Activated CD8-positive, alpha-beta T cell treated with anti-CD3 and anti-CD28 coated beads, Interleukin-2, amount 10 ng/mL, durations not matched to agents 7 days and 5 days (primary cell): ENCODE measurements at regions of chr17 and their contacts with region 1.

Region 1: GRCh38 chr17:57284984-57285646 is 28.8 kb downstream of the MSI2 start:
- DNase-seq: peak; percentile 78
- ATAC-seq: peak; percentile 67
- H3K4me3 Mint-ChIP-seq: peak overlapping the region; percentile 70
- H3K27ac Mint-ChIP-seq: peak overlapping the region; percentile 89
- H3K4me1 Mint-ChIP-seq: peaks cover 81% of the 10 kb centered on the region
- H3K27me3 Mint-ChIP-seq: no peaks in the 10 kb centered on the region

Region 2: DNA sequence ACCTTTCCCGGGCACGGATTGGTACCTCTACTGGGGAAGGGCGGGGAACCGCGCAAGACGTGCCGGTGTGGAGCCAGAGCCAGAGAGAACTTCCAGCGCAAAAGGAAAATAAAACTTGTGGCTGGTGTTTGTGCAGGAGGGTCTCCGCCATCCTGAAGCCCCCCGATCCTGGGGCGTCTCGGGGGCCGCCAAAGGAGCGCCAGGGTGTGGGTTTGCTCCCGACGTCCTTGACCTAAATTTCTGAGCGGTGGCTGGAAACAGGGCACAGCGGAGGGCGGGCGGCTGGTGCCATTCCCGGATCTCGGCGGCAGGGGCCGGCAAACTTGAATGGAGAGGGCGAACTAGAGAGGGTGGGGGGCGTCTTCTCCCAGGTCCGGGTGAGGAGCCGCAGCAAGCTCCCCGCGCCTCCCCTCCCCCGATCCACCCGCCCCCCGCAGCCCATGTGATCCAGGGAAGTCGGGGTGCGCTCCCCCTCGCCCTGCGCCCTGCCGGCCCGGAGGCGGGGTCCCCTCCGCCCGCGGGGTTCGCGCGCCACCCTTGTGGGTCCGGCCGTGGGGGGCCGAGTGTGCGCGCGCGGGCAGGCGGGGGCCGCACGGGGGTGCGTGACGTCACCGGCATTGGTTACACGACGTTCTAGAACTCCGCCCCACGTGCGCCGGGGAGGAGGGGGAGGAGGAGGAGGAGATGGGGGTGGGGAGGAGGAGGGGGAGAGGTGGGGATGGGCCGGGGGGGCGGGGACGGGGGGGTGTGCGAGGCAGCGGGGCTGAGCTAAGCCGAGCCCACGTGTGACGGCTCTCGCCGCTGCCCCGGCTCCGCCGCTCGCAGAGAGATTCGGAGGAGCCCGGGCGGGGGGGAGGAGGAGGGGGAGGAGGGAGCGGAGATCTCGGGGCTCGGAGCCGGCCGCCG is 29.1 kb before region 1 on chr17 and contains the start of gene MSI2:
- CTCF ChIA-PET with region 1: interaction called, 4 read pairs
- POLR2A ChIA-PET with region 1: interaction called, 14 read pairs
- DNase-seq: peak; percentile 94
- ATAC-seq: peak; percentile 85
- H3K4me3 Mint-ChIP-seq: peak within 1 kb of the TSS; percentile 84
- H3K27ac Mint-ChIP-seq: peak within 1 kb of the TSS; percentile 88
- H3K4me1 Mint-ChIP-seq: peaks cover 48% of the 10 kb centered on the region
- H3K27me3 Mint-ChIP-seq: peaks cover 6% of the 10 kb centered on the region
- total RNA-seq, gene MSI2: 123 to 125 TPM